Ovary (tissue), 10 donors: ENCODE measurements at regions of chr11 and their contacts with region 1.

Region 1: GRCh38 chr11:88179141-88179540 is 3.9 kb upstream of the RAB38 start:
- DNase-seq: no peak
- H3K4me3 ChIP-seq: no peak overlapping the region
- H3K27ac ChIP-seq: no peak overlapping the region
- H3K4me1 ChIP-seq: no peaks in the 10 kb centered on the region
- H3K27me3 ChIP-seq: no peaks in the 10 kb centered on the region
- CTCF ChIP-seq: no peak
- EP300 ChIP-seq: no peak
- POLR2A ChIP-seq: no peak

Region 2: DNA sequence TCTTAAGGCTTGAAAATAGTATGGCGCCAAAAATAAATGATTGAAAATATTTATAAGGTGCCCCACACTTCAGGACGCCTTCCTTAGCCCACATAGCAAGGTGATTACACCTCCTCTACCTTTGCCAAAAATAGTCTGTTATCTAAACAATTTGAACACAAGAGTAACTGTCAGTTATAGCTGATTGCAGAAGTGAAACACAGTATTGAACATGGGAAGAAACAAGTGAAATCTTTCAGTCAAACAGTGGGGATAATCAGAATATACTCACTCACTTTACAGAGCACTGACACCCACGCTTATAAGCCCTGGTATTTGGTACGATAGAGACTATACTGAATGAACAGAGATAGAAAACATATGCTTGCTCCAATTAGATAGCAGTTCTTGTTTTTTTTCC is 207.0 kb before region 1 on chr11:
- intact Hi-C with region 1: no loop called
- DNase-seq: no peak
- H3K4me3 ChIP-seq: no peak overlapping the region
- H3K27ac ChIP-seq: no peak overlapping the region
- H3K4me1 ChIP-seq: no peaks in the 10 kb centered on the region
- H3K27me3 ChIP-seq: no peaks in the 10 kb centered on the region
- CTCF ChIP-seq: no peak
- EP300 ChIP-seq: no peak
- POLR2A ChIP-seq: no peak

Region 3: DNA sequence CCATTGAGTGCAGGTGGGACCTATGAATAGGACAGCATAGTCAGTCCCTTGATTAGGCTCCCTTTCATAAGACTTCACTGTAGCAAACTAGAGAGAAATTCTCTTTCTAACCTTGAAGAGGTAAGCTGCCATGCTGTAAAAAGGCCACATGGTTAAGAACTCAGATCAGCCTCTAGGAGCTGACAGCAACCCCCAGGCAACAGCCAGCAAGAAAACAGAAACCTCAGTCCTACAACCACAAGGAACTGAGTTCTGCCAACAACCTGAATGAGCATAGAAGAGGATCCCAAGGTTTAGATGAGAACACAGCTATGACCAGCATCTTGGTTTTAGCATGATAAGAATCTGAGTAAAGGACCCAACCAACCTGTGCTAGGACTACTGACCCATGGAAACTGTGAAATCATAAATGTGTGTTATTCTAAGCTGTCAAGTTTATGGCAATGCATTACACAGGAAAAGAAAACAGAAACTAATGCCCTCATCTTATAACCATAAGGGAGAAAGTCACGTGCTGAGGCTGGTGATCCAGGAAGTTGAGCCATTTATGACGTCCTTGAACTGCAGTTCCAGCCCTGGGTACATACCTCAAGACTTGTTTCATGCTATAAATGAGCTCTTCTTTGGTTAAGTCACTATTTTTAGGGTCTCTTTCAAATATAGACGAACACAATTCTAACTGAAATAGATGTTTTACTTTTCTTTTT is 47.2 kb before region 1 on chr11:
- intact Hi-C with region 1: loop called in 1 of 4 experiments (anchors 2 kb)
- DNase-seq: no peak
- H3K4me3 ChIP-seq: no peak overlapping the region
- H3K27ac ChIP-seq: no peak overlapping the region
- H3K4me1 ChIP-seq: no peaks in the 10 kb centered on the region
- H3K27me3 ChIP-seq: no peaks in the 10 kb centered on the region
- CTCF ChIP-seq: no peak
- EP300 ChIP-seq: no peak
- POLR2A ChIP-seq: no peak

Region 4: DNA sequence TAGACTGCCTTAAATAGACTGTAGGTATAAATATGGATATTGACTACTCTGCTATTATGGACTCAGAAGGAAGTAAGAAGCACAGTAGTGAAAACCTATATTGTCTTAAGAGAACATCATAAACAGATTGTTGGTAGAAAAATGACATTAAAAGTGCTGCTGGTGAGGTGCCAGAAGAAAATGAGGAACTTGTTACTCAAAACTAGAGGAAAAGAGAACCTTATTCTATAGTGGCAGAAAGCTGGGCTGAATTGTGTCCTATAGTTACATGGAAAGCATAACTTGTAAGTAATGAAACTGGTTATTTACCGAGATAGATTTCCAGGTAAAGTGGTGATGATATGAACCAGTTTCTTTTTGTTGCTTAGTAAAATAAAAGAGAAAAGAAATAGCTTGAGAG is 268.1 kb after region 1 on chr11:
- intact Hi-C with region 1: no loop called
- DNase-seq: no peak
- H3K4me3 ChIP-seq: no peak overlapping the region
- H3K27ac ChIP-seq: no peak overlapping the region
- H3K4me1 ChIP-seq: no peaks in the 10 kb centered on the region
- H3K27me3 ChIP-seq: no peaks in the 10 kb centered on the region
- CTCF ChIP-seq: no peak
- EP300 ChIP-seq: no peak
- POLR2A ChIP-seq: no peak